Transverse colon (tissue), 4 donors: ENCODE measurements at regions of chr11 and their contacts with region 1.

Region 1: GRCh38 chr11:46537537-46538295 is 56.1 kb downstream of the AMBRA1 start:
- DNase-seq: peak; percentile 68
- H3K4me3 ChIP-seq: no peak overlapping the region
- H3K27ac ChIP-seq: no peak overlapping the region
- H3K4me1 ChIP-seq: peaks cover 0 to 30% (median 9%) of the 10 kb centered on the region in 4 donors
- H3K27me3 ChIP-seq: no peaks in the 10 kb centered on the region
- CTCF ChIP-seq: peak; percentile 78 to 89 (median 83)
- EP300 ChIP-seq: no peak
- POLR2A ChIP-seq: no peak

Region 2: DNA sequence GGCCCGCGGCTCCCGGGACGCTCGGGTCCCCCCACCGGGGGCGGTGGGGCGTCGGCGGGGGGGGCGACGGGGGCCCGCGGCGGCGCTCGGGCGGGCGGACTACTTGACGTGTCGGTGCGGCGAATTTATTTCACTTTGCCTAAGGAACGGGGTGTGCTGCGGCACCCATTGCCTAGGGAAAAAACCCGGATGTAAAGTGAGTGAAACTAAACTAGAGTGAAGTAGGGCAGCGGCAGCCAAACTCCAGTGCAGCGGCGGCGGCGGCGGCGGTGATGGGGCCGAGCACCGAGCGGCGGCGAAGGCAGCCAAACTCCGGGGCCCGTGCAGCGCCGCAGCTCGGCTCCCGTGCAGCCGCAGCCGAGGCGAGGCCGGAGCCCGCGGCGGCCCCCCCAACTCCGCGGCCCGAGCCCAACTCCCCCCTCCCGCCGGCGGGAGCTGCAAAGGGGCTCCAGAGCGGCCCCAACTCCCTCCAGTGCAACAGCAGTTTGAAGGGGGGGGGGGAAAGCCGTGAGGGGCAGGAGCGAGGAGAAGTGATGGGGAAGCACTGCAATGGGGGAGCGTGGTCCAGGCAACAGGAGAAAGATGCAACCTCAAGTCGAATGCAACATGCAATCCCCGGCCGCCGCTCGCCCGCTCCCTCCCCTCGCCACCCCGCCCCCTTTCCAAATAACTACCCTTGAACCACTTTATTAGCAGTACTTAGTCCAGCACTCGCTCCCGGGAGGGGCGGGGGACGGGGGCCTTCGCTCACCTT is 415.8 kb before region 1 on chr11:
- in situ Hi-C with region 1: no loop called
- intact Hi-C with region 1: no loop called
- DNase-seq: peak; percentile 85
- H3K4me3 ChIP-seq: peak overlapping the region; percentile 47 to 91 (median 68)
- H3K27ac ChIP-seq: peak overlapping the region; percentile 93 to 96 (median 94)
- H3K4me1 ChIP-seq: peaks cover 5 to 31% (median 14%) of the 10 kb centered on the region in 4 donors
- H3K27me3 ChIP-seq: no peaks in the 10 kb centered on the region
- CTCF ChIP-seq: no peak
- EP300 ChIP-seq: no peak
- POLR2A ChIP-seq: peak; percentile 9

Region 3: DNA sequence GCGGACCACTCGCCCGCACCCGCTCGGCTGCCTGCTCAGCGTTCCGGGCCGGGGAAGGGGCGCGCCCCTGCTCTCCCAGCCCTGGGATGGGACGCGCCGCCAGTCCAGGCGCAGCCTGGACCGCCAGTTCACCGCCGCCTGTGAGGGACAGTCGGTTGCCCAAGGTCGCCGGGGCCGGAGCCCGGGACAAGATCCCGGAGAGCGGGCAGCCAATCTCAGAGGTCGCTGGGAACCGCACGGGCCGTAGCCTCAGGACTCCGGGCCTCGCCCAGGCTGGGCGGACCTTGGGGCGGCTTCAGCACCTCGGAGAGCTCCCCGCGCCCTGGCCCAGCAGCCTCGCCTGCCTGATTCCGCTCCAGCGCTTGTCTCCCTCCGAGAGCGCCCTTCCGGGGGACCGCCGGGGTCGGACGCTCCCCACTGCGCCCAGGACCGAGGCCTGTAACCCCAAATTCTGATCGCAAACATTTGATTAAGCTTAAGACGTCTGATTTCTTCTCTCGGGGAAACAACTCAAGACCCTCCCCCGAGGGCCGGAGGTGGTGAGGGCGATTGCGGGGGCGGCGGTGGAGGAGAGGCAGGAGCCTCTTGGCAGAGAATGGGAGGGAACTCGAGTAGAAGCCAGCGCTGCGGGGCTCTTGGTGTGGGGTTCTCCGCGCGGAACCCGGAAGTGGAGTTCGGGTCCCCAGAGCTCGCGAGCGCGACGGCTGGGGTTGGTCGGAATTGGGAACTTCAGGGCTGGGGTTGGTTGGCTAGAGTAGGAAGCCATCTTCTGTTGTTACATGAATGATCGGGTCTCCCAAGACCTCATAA is 145.1 kb before region 1 on chr11:
- in situ Hi-C with region 1: loop called in 3 of 4 experiments (anchors 10 to 25 kb)
- intact Hi-C with region 1: loop called (anchors 10 kb)
- DNase-seq: peak; percentile 85
- H3K4me3 ChIP-seq: peak overlapping the region in 3 of 4 donors; percentile 32 to 52 (median 45)
- H3K27ac ChIP-seq: no peak overlapping the region
- H3K4me1 ChIP-seq: peaks cover 6 to 40% (median 40%) of the 10 kb centered on the region in 4 donors
- H3K27me3 ChIP-seq: peaks cover 48% of the 10 kb centered on the region
- CTCF ChIP-seq: no peak
- EP300 ChIP-seq: no peak
- POLR2A ChIP-seq: no peak